Ascending aorta (tissue), 2 donors: ENCODE measurements at regions of chr2 and their contacts with region 1.

Region 1: GRCh38 chr2:10448208-10448645 is at the start of gene ODC1:
- DNase-seq: peak; percentile 88 to 98
- H3K4me3 ChIP-seq: peak within 1 kb of the TSS; percentile 70 to 83
- H3K27ac ChIP-seq: peak within 1 kb of the TSS; percentile 92 to 96
- H3K4me1 ChIP-seq: peaks cover 7 to 33% of the 10 kb centered on the region in 2 donors
- H3K27me3 ChIP-seq: no peaks in the 10 kb centered on the region
- CTCF ChIP-seq: no peak
- total RNA-seq, gene ODC1: 82.8 TPM

Region 2: GRCh38 chr2:10079870-10080535 is 368.2 kb before region 1 on chr2 and contains the start of gene CYS1:
- intact Hi-C with region 1: loop called (anchors 5 kb)
- DNase-seq: no peak
- H3K4me3 ChIP-seq: peak within 1 kb of the TSS; percentile 84 to 95
- H3K27ac ChIP-seq: peak within 1 kb of the TSS; percentile 85 to 98
- H3K4me1 ChIP-seq: peaks cover 0 to 10% of the 10 kb centered on the region in 2 donors
- H3K27me3 ChIP-seq: no peaks in the 10 kb centered on the region
- CTCF ChIP-seq: peak in 1 of 3 experiments; percentile 57
- total RNA-seq, gene CYS1: 13.8 TPM

Region 3: DNA sequence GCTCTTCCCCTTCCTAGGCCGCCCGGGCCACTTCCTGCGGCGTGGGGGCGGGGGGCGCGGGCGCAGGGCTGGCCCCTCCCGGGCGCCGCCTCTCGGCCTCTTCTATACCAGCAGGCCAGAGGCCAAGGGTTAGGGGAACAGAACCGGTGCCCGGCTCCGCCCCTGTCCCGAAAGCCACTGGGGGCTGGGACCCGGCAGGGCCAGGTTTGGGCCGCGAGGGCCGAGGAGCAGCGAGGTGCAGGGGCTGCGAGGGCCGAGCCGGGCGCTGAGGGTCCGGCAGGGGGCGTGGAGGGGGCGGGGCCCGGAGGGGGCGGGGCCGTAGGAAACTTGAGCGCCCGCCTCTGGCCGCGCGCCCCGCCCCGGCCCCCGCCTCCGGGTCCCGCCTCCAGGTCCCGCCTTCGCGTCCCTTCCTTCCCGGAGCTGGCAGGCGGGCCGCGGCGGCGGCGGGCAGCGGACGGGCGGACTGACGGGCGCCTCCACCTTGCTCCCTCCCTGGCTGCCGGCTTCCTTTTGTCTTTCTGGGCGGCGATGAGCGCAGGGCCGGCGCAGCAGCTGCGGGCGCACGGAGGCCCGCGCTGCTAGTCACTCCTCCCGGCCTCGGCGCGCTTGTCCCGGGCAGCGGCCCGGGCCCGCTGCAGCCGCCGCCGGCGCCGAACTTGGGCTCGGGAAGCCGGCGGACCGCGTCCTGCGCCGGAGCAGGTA is 145.6 kb before region 1 on chr2 and contains the start of gene HPCAL1:
- intact Hi-C with region 1: loop called (anchors 5 kb)
- DNase-seq: peak; percentile 30 to 90
- H3K4me3 ChIP-seq: peak within 1 kb of the TSS; percentile 68 to 92
- H3K27ac ChIP-seq: peak within 1 kb of the TSS; percentile 78 to 84
- H3K4me1 ChIP-seq: peaks cover 0 to 6% of the 10 kb centered on the region in 2 donors
- H3K27me3 ChIP-seq: no peaks in the 10 kb centered on the region
- CTCF ChIP-seq: peak; percentile 50 to 70 (median 59)
- total RNA-seq, gene HPCAL1: 401 TPM

Region 4: GRCh38 chr2:10408649-10409579 is 39.3 kb before region 1 on chr2:
- intact Hi-C with region 1: loop called (anchors 1 kb)
- DNase-seq: peak in 1 of 2 donors; percentile 86
- H3K4me3 ChIP-seq: no peak overlapping the region
- H3K27ac ChIP-seq: peak overlapping the region in 1 of 2 donors; percentile 52
- H3K4me1 ChIP-seq: peaks cover 24 to 43% of the 10 kb centered on the region in 2 donors
- H3K27me3 ChIP-seq: no peaks in the 10 kb centered on the region
- CTCF ChIP-seq: peak; percentile 91 to 94 (median 91)

Region 5: DNA sequence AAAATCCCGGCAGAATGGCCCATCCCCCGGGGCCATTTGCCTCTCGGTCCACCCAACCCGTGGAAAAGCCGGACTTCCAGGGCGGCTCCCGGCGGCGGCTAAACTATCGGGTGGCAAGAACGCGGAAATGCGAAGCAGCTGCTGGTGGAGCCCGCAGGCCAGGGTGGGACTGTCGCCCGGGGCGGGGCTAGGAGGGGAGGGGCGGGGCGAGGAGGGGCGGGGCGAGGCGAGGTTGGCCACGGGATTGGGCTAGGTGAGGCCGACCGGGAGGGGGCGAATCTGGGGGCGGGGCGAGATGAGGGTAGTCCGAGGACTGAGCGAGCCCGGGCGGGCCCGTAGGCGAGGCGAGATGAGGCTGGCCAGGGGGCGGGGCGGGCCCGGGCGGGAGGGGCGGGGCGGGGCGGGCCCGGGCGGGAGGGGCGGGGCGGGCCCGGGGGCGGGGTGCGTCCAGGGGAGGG is 706.7 kb after region 1 on chr2:
- intact Hi-C with region 1: loop called (anchors 10 kb)
- DNase-seq: peak; percentile 88 to 98
- H3K4me3 ChIP-seq: peak overlapping the region; percentile 71 to 85
- H3K27ac ChIP-seq: peak overlapping the region; percentile 96
- H3K4me1 ChIP-seq: peaks cover 4 to 18% of the 10 kb centered on the region in 2 donors
- H3K27me3 ChIP-seq: no peaks in the 10 kb centered on the region
- CTCF ChIP-seq: no peak

Region 6: DNA sequence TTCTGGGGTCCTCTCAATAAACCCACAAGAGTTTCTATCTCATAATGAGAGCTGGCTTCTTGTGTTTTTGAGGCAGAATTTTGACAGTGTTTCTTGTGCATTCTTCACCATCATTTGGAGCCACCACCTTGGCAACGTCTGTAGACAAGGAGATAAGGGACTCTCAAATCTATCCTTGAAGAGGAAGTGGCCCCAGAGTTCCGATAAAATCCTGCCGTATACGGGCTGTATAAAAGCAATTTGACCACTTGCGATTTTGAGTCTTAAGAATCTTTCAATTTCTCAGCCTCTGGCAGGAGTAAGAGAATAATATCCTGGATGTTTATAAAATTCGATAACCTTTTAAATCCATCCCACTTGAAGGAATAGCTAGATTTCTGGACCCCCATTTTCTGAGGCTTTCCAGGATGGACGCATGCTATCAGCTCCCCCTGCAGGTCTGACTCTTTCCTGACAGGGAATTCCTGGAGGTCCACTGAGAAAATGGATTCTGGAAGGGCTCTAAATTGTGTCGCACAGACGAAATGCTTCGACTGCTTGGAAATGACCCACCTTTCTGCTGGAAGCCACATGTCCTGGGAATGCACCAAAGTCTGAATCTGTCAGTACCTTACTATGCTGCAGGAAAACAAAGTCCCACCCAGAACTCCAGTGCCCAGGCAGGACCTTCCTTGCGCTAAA is 963.7 kb after region 1 on chr2:
- intact Hi-C with region 1: loop called (anchors 5 kb)
- DNase-seq: peak in 1 of 2 donors; percentile 79
- H3K4me3 ChIP-seq: peak overlapping the region; percentile 44 to 59
- H3K27ac ChIP-seq: no peak overlapping the region
- H3K4me1 ChIP-seq: peaks cover 4 to 16% of the 10 kb centered on the region in 2 donors
- H3K27me3 ChIP-seq: no peaks in the 10 kb centered on the region
- CTCF ChIP-seq: peak; percentile 62 to 96 (median 83)

Region 7: GRCh38 chr2:11421863-11422490 is 973.8 kb after region 1 on chr2:
- intact Hi-C with region 1: no loop called
- DNase-seq: no peak
- H3K4me3 ChIP-seq: no peak overlapping the region
- H3K27ac ChIP-seq: no peak overlapping the region
- H3K4me1 ChIP-seq: no peaks in the 10 kb centered on the region
- H3K27me3 ChIP-seq: no peaks in the 10 kb centered on the region
- CTCF ChIP-seq: no peak